ENCODE measurements at regions of chr5 and their contacts with region 1.

Region 1: DNA sequence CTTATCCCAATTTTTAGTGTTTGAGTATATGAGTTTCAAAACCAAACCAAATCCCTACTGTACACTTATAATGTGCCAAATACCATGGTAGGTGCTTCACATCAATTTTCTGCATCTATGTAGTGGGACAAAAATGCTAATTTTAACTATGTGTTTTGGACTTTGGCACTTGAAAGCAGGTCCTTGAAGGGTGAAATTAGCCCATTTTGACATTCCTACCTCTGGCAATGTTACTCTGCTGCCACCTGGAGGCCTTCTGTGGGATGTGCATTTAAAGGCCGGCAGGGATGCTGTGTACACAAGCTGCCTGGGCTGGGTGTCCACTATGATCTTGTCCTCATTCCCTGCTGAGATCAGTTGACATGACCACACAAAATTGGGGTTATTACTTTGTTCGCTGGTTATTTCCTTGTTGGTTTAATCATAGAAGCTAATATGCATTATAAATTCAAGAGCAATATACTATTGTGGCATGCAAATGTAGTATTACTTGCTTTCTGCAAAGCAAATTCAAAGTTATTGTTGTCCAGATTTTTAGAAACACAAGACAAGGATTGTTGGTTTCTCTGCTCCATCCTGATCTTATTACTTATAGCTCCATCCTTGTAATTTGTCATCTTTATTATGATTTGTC is 166.8 kb downstream of the ARHGEF28 start:
- DNase-seq: peak; percentile 79
- H3K4me3 ChIP-seq: no peak overlapping the region
- H3K27ac ChIP-seq: no peak overlapping the region
- H3K4me1 ChIP-seq: peaks cover 3 to 32% (median 10%) of the 10 kb centered on the region in 6 donors
- H3K27me3 ChIP-seq: no peaks in the 10 kb centered on the region
- CTCF ChIP-seq: peak; percentile 49 to 91 (median 88)
- POLR2A ChIP-seq: no peak

Region 2: DNA sequence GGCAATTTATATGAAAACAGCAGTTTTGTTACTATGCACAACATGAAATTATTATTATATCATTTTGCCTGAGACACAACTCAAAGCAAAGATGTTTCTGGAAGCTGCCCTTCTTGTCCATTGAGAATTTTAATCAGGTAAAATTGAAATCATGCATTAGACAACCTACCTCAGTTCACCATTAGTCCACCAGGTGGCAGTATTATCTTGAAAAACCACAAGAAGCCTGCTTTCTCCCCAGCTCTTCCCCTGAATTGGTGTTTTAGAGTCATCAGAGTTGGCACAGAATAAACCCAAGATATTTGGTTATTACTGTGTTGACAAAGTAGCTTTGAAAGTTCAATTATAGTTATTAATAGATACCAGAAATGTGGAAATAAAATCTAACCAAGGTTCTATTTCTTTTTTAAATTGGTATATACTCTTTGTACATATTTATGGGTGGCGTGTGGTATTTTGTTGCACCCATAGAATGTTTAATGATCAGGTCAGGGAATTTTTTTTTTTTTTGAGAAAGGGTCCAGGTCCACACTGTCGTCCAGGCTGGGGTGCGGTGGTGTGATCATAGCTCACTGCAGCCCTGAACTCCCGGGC is 201.6 kb before region 1 on chr5:
- intact Hi-C with region 1: loop called (anchors 2 kb)
- DNase-seq: no peak
- H3K4me3 ChIP-seq: no peak overlapping the region
- H3K27ac ChIP-seq: no peak overlapping the region
- H3K4me1 ChIP-seq: peaks cover 0 to 6% (median 0%) of the 10 kb centered on the region in 6 donors
- H3K27me3 ChIP-seq: no peaks in the 10 kb centered on the region
- CTCF ChIP-seq: peak; percentile 75 to 90 (median 84)
- POLR2A ChIP-seq: no peak

Region 3: GRCh38 chr5:73812962-73813588 is 20.3 kb after region 1 on chr5:
- intact Hi-C with region 1: no loop called
- DNase-seq: no peak
- H3K4me3 ChIP-seq: no peak overlapping the region
- H3K27ac ChIP-seq: no peak overlapping the region
- H3K4me1 ChIP-seq: no peaks in the 10 kb centered on the region
- H3K27me3 ChIP-seq: no peaks in the 10 kb centered on the region
- CTCF ChIP-seq: no peak
- POLR2A ChIP-seq: no peak

Region 4: GRCh38 chr5:74640450-74640953 is 847.7 kb after region 1 on chr5 and contains the start of gene ENC1:
- intact Hi-C with region 1: no loop called
- DNase-seq: peak; percentile 99
- H3K4me3 ChIP-seq: peak within 1 kb of the TSS; percentile 64 to 87 (median 78)
- H3K27ac ChIP-seq: peak within 1 kb of the TSS; percentile 84 to 98 (median 92)
- H3K4me1 ChIP-seq: peaks cover 18 to 88% (median 64%) of the 10 kb centered on the region in 6 donors
- H3K27me3 ChIP-seq: peaks cover 0 to 19% (median 0%) of the 10 kb centered on the region in 7 donors
- CTCF ChIP-seq: peak; percentile 48 to 90 (median 70)
- POLR2A ChIP-seq: peak; percentile 73 to 79 (median 74)
- total RNA-seq, gene ENC1: 5.4 to 19.5 (median 13.5) TPM